ENCODE measurements at regions of chr22 and their contacts with region 1.

Region 1: DNA sequence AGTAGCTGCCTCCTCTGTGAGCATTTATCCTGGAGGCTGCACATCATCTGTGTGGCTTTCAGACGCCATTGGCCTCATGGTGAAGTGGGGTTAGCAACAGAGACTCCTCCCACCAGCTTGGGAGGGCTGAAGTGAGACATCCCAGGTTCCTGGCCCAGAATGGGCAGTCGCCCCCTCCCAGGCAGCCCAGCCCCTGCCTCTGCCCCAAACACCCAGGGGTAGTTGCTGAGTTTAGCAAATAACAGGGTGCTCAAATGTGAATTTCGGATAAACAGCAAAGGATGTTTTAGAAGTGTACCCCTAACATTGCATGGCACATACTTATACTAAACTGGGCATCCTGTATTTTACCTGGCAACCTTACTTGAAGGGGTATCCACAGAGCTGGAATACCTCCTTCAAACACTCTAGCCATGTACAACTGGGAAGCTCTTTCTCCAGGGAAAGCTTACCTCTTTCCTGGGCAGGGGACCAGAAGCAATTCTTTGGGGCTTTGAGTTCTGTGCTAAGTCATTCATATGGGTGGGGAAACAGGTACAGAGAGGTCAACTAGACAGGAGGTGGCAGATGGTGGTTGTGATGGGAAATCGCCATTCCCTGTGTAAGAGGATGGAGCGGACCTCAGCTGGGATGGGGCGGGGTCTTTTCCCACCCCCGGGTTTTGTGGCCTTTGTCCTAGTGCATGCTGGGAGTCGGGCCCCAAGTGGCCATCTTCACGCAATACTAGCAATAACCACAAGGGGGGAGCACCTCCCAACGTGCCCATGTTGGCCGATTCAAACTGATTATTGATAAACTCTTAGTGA is 19.3 kb downstream of the MTFP1 start:
- DNase-seq: peak; percentile 59 to 66 (median 62)
- H3K4me3 ChIP-seq: no peak overlapping the region
- H3K27ac ChIP-seq: no peak overlapping the region
- H3K4me1 ChIP-seq: peaks cover 0 to 9% (median 4%) of the 10 kb centered on the region in 4 experiments
- H3K27me3 ChIP-seq: peaks cover 0 to 13% (median 4%) of the 10 kb centered on the region in 5 experiments

Region 2: DNA sequence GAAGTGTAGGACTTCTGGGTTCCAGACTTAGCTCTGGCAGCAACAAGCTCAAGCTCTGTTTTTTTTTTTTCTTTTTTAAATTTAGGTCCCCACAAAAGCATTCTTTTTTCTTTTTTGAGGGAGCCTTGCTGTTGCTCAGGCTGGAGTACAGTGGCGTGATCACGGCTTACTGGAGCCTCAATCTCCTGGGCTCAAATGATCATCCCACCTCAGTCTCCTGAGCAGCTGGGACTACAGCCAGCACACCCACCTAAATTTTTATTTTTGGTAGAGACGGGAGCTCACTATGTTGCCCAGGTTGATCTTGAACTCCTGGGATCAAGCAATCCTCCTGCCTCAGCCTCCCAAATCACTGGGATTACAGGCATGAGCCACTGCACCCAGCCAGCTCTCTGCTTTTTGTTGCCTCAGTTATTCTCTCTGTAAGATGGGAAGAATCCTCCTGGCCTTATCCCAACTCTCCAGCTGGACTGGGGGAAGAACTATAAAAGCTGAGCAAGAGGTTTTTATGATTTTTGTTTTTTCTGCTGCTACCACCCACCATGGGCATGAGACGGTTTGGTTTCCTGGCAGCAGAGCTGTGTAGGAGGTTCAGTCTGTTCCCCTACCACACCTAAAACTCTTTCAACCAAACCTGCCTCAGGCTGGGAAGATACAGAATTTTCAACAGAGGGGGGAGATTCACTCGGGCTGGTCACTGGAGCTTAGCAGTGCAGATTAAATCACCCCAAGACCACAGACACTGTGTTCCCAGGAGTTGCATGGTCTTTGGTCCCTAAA is 30.9 kb before region 1 on chr22:
- CTCF ChIA-PET with region 1: interaction called, 15 read pairs
- POLR2A ChIA-PET with region 1: no interaction called
- DNase-seq: no peak
- H3K4me3 ChIP-seq: no peak overlapping the region
- H3K27ac ChIP-seq: no peak overlapping the region
- H3K4me1 ChIP-seq: peaks cover 0 to 2% (median under 1%) of the 10 kb centered on the region in 4 experiments
- H3K27me3 ChIP-seq: no peaks in the 10 kb centered on the region

Region 3: DNA sequence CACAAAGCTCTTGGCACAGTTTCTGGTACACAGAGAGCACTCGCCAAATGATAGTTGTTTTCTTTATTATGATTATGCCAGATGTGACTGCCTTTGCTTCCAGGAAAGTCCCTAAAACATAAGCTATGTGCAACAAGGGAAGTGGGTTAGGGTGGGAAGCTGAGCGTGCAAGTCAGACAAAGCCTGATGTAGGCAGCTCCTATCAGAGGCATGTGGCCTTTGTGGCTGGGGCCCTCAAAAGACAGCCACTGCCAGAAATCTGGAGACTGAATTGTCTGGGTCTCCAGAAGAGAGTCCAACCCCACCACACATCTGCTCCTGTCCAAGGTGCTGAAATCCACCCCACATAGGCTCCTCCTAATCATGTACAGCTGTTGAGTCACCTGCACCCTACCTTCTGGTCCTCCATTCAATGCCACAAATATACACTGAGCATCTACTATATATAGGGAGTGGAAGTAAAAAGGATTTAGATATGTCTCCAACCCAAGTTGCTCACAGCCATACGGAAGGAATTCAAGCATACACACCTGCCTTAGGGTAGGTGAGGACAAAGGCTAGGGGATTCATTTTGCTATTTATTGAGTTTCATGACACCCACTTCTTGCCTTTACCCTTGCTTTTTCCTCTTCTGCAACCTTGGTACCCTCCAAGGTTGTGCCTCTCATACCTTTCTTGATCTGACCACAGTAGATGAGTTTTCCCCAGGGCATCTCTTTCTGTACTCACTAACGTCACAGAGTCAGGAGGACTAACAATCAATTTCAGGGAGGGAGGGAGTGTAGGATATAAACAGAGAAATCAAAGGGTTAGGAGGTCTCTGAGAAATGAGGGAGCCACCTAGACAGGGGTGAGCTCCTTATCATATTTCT is 14.6 kb after region 1 on chr22:
- CTCF ChIA-PET with region 1: interaction called, 15 read pairs
- POLR2A ChIA-PET with region 1: no interaction called
- DNase-seq: peak in 2 of 3 donors; percentile 67 to 68
- H3K4me3 ChIP-seq: no peak overlapping the region
- H3K27ac ChIP-seq: no peak overlapping the region
- H3K4me1 ChIP-seq: no peaks in the 10 kb centered on the region
- H3K27me3 ChIP-seq: no peaks in the 10 kb centered on the region

Region 4: DNA sequence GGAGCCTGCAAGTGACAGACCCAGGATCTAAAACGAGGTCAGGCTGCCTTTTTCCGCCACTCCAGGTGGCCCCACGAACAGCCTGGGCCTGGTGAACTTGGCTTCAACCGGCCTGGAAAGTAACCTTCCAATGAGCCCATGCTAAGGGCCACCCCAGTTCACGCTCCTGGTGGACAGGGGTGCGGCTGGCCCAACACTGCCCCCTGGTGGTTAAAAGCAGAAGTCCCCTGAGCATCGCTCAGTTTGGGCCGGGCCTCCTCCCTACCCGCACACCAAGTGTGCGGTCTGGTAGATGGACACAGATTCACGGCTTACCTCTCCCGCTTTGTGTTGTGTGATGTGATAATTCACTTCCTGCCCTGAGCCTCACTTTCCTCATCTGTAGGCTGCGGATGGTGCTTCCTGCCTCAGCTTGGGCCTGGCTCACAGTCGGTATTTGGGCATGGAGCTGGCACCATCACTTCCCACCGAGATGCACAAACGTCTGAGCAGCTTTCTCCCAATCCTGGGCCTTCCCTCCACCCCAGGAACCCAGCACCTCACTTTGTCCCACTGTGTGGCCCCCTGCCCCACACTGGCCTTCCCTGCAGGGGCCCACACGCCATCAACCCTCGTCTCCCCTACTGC is 40.6 kb after region 1 on chr22:
- CTCF ChIA-PET with region 1: interaction called, 23 read pairs
- POLR2A ChIA-PET with region 1: no interaction called
- DNase-seq: peak; percentile 59 to 76 (median 71)
- H3K4me3 ChIP-seq: no peak overlapping the region
- H3K27ac ChIP-seq: no peak overlapping the region
- H3K4me1 ChIP-seq: no peaks in the 10 kb centered on the region
- H3K27me3 ChIP-seq: peaks cover 0 to 5% (median 0%) of the 10 kb centered on the region in 5 experiments

Measured in common myeloid progenitor, CD34-positive (primary cell).